Heart left ventricle (tissue), 16 donors: ENCODE measurements at regions of chr2 and their contacts with region 1.

Region 1: DNA sequence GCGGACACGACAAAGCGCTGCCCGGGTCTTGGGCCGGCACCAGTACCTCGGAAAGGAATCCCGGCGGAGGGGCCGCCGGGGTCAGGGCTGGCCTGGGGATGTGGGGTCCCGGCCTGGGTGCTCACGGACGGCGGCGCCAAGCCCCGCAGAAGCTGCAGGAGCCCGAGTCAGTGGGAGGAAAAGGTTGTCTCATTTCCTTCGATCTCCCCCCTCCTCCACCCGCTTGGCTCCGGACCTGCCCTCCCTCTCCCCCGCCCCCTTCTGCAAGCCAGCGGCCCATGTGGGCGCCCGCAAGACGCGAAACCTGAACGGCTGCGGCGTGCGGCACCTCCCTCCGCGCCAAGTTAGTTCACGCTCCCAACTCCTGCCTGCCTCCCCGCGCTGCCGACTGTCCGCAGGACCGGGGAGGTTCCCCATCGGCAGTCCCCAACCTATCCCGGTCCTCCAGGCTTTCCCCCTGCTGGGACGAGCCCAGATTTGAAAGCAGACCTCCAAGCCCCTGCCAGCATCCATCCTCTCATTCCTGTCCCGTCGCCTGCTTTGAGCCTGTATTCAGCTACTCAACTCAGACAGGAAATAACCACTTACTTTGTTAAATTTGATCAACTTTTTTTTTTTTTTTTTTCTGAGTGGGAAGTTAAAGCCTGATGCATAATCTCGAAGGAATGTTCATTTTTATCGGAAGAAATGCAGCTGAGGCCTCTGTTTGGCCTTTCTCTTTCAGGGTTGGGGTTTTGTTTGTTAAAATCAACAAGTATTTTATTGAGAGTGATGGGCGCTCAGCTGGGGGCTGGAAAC is at the start of gene EVA1A:
- DNase-seq: peak; percentile 32 to 70 (median 56)
- ATAC-seq: peak; percentile 36 to 76 (median 58)
- H3K4me3 ChIP-seq: peak within 1 kb of the TSS; percentile 48 to 84 (median 64)
- H3K27ac ChIP-seq: peak within 1 kb of the TSS in 10 of 12 donors; percentile 40 to 82 (median 63)
- H3K4me1 ChIP-seq: peaks cover 0 to 21% (median 6%) of the 10 kb centered on the region in 12 donors
- H3K27me3 ChIP-seq: peaks cover 0 to 36% (median 6%) of the 10 kb centered on the region in 9 donors
- CTCF ChIP-seq: no peak
- POLR2A ChIP-seq: no peak
- total RNA-seq, gene EVA1A: 0.42 to 5.0 (median 1.4) TPM in 8 of 9 donors, not detected in the other

Region 2: GRCh38 chr2:75450068-75450467 is 110.9 kb before region 1 on chr2:
- intact Hi-C with region 1: no loop called
- DNase-seq: no peak
- ATAC-seq: no peak
- H3K4me3 ChIP-seq: no peak overlapping the region
- H3K27ac ChIP-seq: no peak overlapping the region
- H3K4me1 ChIP-seq: no peaks in the 10 kb centered on the region
- H3K27me3 ChIP-seq: no peaks in the 10 kb centered on the region
- CTCF ChIP-seq: no peak
- POLR2A ChIP-seq: no peak

Region 3: GRCh38 chr2:75480971-75481836 is 79.8 kb before region 1 on chr2:
- intact Hi-C with region 1: loop called in 1 of 10 experiments (anchors 10 kb)
- DNase-seq: no peak
- ATAC-seq: no peak
- H3K4me3 ChIP-seq: no peak overlapping the region
- H3K27ac ChIP-seq: no peak overlapping the region
- H3K4me1 ChIP-seq: peaks cover 0 to 2% (median 0%) of the 10 kb centered on the region in 12 donors
- H3K27me3 ChIP-seq: peaks cover 0 to 5% (median 0%) of the 10 kb centered on the region in 9 donors
- CTCF ChIP-seq: no peak
- POLR2A ChIP-seq: no peak

Region 4: GRCh38 chr2:75602724-75603342 is 41.9 kb after region 1 on chr2:
- intact Hi-C with region 1: loop called in 1 of 10 experiments (anchors 5 kb)
- DNase-seq: no peak
- ATAC-seq: peak in 1 of 4 donors; percentile 50
- H3K4me3 ChIP-seq: no peak overlapping the region
- H3K27ac ChIP-seq: no peak overlapping the region
- H3K4me1 ChIP-seq: no peaks in the 10 kb centered on the region
- H3K27me3 ChIP-seq: peaks cover 0 to 17% (median 3%) of the 10 kb centered on the region in 9 donors
- CTCF ChIP-seq: no peak
- POLR2A ChIP-seq: no peak